Thyroid gland (tissue), 4 donors: ENCODE measurements at regions of chr14 and their contacts with region 1.

Region 1: GRCh38 chr14:67166450-67166853 is 22.8 kb upstream of the GARIN2 start:
- DNase-seq: peak; percentile 50 to 60
- H3K4me3 ChIP-seq: no peak overlapping the region
- H3K27ac ChIP-seq: no peak overlapping the region
- H3K4me1 ChIP-seq: peaks cover 6 to 11% of the 10 kb centered on the region in 2 donors
- H3K27me3 ChIP-seq: no peaks in the 10 kb centered on the region
- CTCF ChIP-seq: peak; percentile 38 to 96 (median 78)
- POLR2A ChIP-seq: no peak

Region 2: GRCh38 chr14:67068251-67068650 is 98.2 kb before region 1 on chr14:
- intact Hi-C with region 1: no loop called
- DNase-seq: no peak
- H3K4me3 ChIP-seq: no peak overlapping the region
- H3K27ac ChIP-seq: no peak overlapping the region
- H3K4me1 ChIP-seq: no peaks in the 10 kb centered on the region
- H3K27me3 ChIP-seq: no peaks in the 10 kb centered on the region
- CTCF ChIP-seq: no peak
- POLR2A ChIP-seq: no peak

Region 3: DNA sequence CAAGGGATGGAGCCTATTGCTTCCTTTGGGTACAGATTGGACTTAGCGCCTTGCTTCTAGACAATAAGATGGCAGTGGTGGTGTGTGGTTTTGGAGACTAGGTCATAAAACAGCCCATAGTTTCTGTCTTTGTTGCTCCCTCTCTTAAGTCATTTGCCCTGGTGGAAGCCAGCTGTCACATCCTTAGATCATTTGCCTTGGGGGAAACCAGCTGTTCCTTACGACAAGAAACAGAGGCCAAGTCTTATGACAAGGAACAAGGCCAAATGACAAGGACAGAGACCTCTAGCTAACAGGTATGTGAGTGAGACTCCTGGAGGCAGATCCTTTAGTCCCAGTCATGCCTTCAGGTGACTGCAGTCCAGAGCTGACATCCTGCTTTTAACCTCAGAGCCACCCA is 65.6 kb after region 1 on chr14:
- intact Hi-C with region 1: loop called (anchors 10 kb)
- DNase-seq: no peak
- H3K4me3 ChIP-seq: no peak overlapping the region
- H3K27ac ChIP-seq: peak overlapping the region; percentile 44 to 59 (median 51)
- H3K4me1 ChIP-seq: peaks cover 0 to 13% of the 10 kb centered on the region in 2 donors
- H3K27me3 ChIP-seq: no peaks in the 10 kb centered on the region
- CTCF ChIP-seq: no peak
- POLR2A ChIP-seq: no peak

Region 4: DNA sequence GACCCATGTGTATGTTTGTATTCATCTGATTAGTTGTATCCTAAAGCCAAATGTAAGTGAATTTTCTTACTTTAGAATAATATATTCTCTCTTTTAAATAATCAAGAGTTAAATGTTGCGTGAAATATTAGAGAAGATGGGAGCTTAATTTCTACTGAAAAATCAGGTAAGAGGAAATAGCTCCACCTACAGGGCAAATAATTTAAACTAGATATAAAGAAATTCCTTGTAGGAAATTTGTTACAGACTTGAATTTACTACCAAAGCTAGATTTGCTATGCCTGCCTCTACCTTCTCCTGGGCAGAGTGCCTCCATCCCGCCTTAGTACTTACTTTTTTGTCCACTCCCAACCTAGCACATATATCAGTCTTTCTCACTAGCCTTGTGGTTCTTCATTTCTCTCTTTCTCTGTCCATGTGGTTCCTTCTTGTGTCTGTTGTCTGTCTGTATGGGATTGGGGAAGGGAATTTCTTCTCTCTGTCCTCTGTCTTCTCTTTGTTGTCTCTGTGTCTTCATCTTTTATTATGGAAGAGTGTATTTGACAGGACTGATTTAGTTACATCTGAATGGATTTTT is 119.5 kb after region 1 on chr14:
- intact Hi-C with region 1: loop called (anchors 5 kb)
- DNase-seq: no peak
- H3K4me3 ChIP-seq: no peak overlapping the region
- H3K27ac ChIP-seq: no peak overlapping the region
- H3K4me1 ChIP-seq: peaks cover 6 to 11% of the 10 kb centered on the region in 2 donors
- H3K27me3 ChIP-seq: no peaks in the 10 kb centered on the region
- CTCF ChIP-seq: peak; percentile 21 to 63 (median 40)
- POLR2A ChIP-seq: no peak